ENCODE measurements at regions of chr9 and their contacts with region 1.

Region 1: GRCh38 chr9:33458444-33458843 is 11.1 kb upstream of the AQP3 start:
- DNase-seq: no peak
- ATAC-seq: peak; percentile 75
- H3K4me3 Mint-ChIP-seq: no peak overlapping the region
- H3K27ac Mint-ChIP-seq: no peak overlapping the region
- H3K4me1 Mint-ChIP-seq: peaks cover 8% of the 10 kb centered on the region
- H3K27me3 Mint-ChIP-seq: no peaks in the 10 kb centered on the region
- CTCF ChIP-seq: no peak

Region 2: DNA sequence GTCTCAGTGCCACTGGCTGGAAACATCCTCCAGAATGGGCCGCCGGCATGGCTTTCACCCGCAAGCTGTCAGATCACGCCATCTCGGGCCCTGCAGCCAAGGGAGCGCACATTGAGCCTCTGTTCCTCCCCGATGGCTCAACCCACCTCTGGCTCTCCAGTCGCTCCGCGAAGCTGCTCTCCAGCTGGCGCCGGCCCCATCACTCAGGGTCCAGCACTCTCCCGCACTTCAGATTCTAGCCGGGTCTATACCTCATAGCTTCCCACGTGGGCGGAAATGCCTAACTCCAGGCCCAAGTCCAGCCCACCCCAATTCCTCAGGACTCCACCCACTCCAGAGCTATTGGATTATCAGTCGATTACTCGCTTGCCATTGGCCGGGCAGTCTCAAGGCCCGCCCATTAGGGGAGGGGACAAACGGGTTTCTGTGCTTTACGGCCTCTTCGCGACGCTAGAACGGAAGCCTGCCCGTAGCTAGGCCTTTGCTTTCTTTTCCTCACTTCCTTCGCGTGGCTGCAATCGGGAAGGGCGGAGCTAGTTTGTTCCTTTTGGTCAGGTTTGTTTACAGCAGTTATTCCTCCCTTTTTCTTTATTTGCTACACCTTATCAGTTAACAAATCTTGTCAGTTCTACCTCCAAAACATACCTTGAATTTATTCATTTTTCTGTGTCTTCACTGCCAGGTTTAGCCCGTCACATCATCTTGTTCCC is 15.4 kb after region 1 on chr9 and contains the start of gene NOL6:
- CTCF ChIA-PET with region 1: interaction called, 3 read pairs
- POLR2A ChIA-PET with region 1: interaction called, 7 read pairs
- intact Hi-C with region 1: loop called (anchors 2 kb)
- DNase-seq: peak; percentile 93
- ATAC-seq: peak; percentile 99
- H3K4me3 Mint-ChIP-seq: peak within 1 kb of the TSS; percentile 99
- H3K27ac Mint-ChIP-seq: peak within 1 kb of the TSS; percentile 94
- H3K4me1 Mint-ChIP-seq: peaks cover 28% of the 10 kb centered on the region
- H3K27me3 Mint-ChIP-seq: no peaks in the 10 kb centered on the region
- CTCF ChIP-seq: no peak
- total RNA-seq, gene NOL6: 59.9 and 60.1 TPM in 2 replicates

Measured in activated B cell treated with CpG ODN at 0.5 μM for 24 hours (primary cell).